CD8-positive, alpha-beta T cell (primary cell): ENCODE measurements at regions of chr18 and their contacts with region 1.

Region 1: DNA sequence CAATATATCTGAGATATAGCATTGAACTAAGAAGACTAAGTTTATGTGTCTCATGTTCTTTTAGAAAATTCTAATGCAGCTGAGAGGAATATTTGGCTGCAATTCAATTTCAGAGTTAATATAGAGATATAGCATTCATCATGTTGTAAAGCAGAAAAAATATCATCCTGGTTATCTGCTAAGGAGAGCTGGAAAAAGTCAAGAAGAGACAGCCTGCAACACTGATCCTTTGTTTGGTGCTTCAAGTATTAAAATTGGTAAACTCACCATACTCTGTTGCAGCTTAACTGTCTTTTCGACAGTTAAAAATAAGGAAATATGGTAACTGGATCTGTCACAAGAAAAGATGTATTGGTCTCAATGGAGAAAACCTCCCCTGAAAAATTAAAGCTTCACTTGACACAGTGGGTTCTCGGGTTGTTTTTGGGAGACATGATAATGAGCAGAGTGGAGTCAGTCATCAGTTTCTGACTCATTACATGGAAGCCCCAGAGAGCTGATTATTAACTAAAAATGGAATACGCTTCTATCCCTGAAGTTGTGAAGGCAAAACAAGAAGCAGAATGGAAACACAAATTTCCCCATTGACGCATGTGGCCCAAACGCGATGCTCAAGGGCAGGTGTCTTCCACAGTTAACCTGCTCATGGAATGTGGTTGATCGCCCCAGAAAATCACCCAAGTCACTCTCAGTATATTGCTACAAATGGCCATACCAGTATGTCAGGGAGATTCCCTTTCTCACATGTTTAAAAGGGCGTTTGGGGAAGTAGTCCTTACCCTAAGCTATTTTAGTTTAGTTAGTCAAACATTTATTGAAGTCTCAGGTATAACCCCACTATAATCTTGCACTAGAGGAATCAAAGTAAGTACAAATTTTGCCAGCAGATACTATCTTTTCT is 8.2 kb downstream of the BCL2 start:
- DNase-seq: no peak
- ATAC-seq: no peak
- H3K4me3 ChIP-seq: no peak overlapping the region
- H3K4me3 Mint-ChIP-seq: no peak overlapping the region
- H3K27ac ChIP-seq: no peak overlapping the region
- H3K27ac Mint-ChIP-seq: peak overlapping the region; percentile 90
- H3K4me1 ChIP-seq: peaks cover 84% of the 10 kb centered on the region
- H3K4me1 Mint-ChIP-seq: peaks cover 87% of the 10 kb centered on the region
- H3K27me3 ChIP-seq: no peaks in the 10 kb centered on the region
- H3K27me3 Mint-ChIP-seq: no peaks in the 10 kb centered on the region
- CTCF ChIP-seq: no peak

Region 2: GRCh38 chr18:63299837-63300745 is 11.3 kb before region 1 on chr18:
- CTCF ChIA-PET with region 1: interaction called, 7 read pairs
- POLR2A ChIA-PET with region 1: interaction called, 12 read pairs
- intact Hi-C with region 1: loop called (anchors 1 to 2 kb)
- DNase-seq: peak in 3 of 9 experiments; percentile 38 to 60 (median 39)
- ATAC-seq: peak; percentile 59
- H3K4me3 ChIP-seq: no peak overlapping the region
- H3K4me3 Mint-ChIP-seq: peak overlapping the region; percentile 43
- H3K27ac ChIP-seq: peak overlapping the region; percentile 4 to 67
- H3K27ac Mint-ChIP-seq: peak overlapping the region; percentile 86
- H3K4me1 ChIP-seq: peaks cover 71% of the 10 kb centered on the region
- H3K4me1 Mint-ChIP-seq: peaks cover 75% of the 10 kb centered on the region
- H3K27me3 ChIP-seq: no peaks in the 10 kb centered on the region
- H3K27me3 Mint-ChIP-seq: no peaks in the 10 kb centered on the region
- CTCF ChIP-seq: no peak